Motor neuron (in vitro differentiated cells): ENCODE measurements at regions of chr13 and their contacts with region 1.

Region 1: GRCh38 chr13:98405107-98405571 is 171.8 kb downstream of the STK24 start:
- ATAC-seq: peak in 7 of 8 experiments; percentile 38 to 98 (median 96)
- H3K4me3 ChIP-seq: no peak overlapping the region
- H3K27ac ChIP-seq: no peak overlapping the region
- H3K4me1 ChIP-seq: peaks cover 24 to 25% of the 10 kb centered on the region in 2 donors

Region 2: GRCh38 chr13:97975848-97976609 is 429.1 kb before region 1 on chr13:
- in situ Hi-C with region 1: loop called in 1 of 9 experiments (anchors 25 kb)
- ATAC-seq: peak; percentile 87 to 94 (median 90)
- H3K4me3 ChIP-seq: peak overlapping the region; percentile 59 to 97 (median 78)
- H3K27ac ChIP-seq: peak overlapping the region; percentile 88 to 89
- H3K4me1 ChIP-seq: peaks cover 3 to 20% of the 10 kb centered on the region in 2 donors

Region 3: DNA sequence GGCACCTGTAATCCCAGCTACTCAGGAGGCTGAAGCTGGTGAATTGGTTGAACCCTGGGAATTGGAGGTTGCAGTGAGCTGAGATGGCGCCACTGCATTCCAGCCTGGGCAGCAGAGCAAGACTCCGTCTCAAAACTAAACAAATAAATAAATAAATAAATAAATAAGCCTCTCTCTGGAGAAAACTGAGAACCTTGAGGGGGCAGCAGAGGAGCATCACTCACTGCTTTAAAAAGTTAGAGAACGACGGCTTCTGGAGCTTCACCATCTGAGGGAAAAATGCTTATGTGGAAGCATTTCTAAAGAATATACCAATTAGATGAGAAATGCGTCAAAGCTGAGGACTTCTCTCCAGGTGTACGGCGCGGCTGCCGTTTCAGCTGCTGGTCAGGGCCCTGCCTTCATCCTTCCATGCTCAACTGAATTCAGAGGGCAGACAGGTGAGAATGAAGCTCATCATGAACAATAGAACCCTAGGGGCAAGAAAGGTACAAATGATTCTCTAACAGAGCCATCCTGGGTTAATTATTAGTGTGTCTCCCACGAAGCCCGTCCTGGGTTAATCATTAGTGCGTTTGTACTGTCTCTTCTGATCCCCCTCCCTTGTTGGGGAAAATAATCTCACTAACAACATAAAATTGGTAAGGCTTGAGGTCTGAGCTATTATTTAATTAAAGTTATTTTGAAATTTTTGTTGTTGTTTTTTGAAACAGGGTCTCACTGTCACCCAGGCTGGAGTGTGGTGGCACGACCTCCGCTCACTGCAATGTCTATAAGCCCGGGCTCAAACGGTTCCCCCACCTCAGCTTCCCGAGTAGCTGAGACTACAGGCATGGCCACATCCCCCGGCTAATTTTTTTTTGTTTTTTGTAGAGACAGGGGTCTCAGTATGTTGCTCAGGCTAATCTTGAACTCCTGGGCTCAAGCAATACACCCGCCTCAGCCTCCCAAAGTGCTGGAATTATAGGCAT is 371.6 kb before region 1 on chr13:
- in situ Hi-C with region 1: loop called in 2 of 9 experiments (anchors 25 kb)
- ATAC-seq: peak in 3 of 8 experiments; percentile 64 to 84 (median 69)
- H3K4me3 ChIP-seq: no peak overlapping the region
- H3K27ac ChIP-seq: no peak overlapping the region
- H3K4me1 ChIP-seq: peaks cover 0 to 2% of the 10 kb centered on the region in 2 donors

Region 4: GRCh38 chr13:98142380-98143156 is 262.6 kb before region 1 on chr13 and contains the start of gene FARP1:
- in situ Hi-C with region 1: loop called in 2 of 9 experiments (anchors 25 kb)
- ATAC-seq: peak; percentile 73 to 92 (median 89)
- H3K4me3 ChIP-seq: peak within 1 kb of the TSS; percentile 60 to 98 (median 88)
- H3K27ac ChIP-seq: peak within 1 kb of the TSS; percentile 54 to 72
- H3K4me1 ChIP-seq: peaks cover 14 to 22% of the 10 kb centered on the region in 2 donors
- total RNA-seq, gene FARP1: 6.5 to 349 (median 25.6) TPM

Region 5: DNA sequence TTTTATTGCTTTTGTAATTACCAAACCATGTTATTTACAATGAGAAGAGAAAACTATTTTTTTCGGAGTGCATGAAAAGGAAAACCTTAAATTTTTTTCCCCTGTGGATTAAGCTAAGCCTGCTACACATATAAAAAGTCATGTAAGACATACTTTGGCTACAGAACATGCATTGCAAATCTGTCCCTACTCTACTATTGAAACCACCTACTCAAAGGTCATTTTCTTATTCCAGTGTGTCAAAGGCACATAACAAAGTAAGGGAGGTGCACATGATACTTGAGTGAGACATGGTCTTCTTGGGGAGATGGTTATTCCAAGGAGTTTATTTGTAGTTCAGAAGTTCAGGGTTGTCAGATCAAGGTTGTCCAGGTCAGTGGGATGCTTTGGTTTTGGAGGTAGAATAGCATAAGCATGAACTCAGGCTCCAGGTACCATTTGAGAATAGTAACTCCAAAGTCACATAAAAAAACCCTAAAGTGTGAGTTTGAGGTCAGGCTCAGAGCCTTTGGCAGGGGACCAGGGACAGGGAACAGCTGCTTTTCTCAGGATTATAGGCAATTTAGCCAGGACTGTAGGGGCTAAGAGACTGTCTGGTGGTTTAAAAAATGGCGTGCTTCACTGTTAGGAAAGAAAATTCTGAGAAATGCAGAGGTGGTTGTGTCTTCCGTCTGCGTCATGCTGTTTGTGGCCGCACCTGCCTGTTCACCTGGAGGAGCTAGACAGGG is 246.8 kb before region 1 on chr13:
- in situ Hi-C with region 1: no loop called
- ATAC-seq: peak in 1 of 8 experiments; percentile 47
- H3K4me3 ChIP-seq: no peak overlapping the region
- H3K27ac ChIP-seq: no peak overlapping the region
- H3K4me1 ChIP-seq: no peaks in the 10 kb centered on the region

Region 6: GRCh38 chr13:98731925-98732324 is 326.8 kb after region 1 on chr13:
- in situ Hi-C with region 1: no loop called
- ATAC-seq: no peak
- H3K4me3 ChIP-seq: no peak overlapping the region
- H3K27ac ChIP-seq: no peak overlapping the region
- H3K4me1 ChIP-seq: no peaks in the 10 kb centered on the region